ENCODE measurements at regions of chr2 and their contacts with region 1.

Region 1: GRCh38 chr2:172710584-172711024 is 25.0 kb upstream of the RAPGEF4 start:
- DNase-seq: peak; percentile 56 to 66
- ATAC-seq: peak; percentile 87
- H3K4me3 ChIP-seq: no peak overlapping the region
- H3K27ac ChIP-seq: no peak overlapping the region
- H3K4me1 ChIP-seq: 0 out of 3 replicates have a peak, but pooled peaks cover 4% of the 10 kb centered on the region
- CTCF ChIP-seq: peak; percentile 94
- EP300 ChIP-seq: no peak
- POLR2A ChIP-seq: no peak
- RAD21 ChIP-seq: peak; percentile 96

Region 2: GRCh38 chr2:172588931-172589330 is 121.7 kb before region 1 on chr2:
- CTCF ChIA-PET with region 1: interaction called, 217 read pairs
- POLR2A ChIA-PET with region 1: no interaction called
- DNase-seq: no peak
- ATAC-seq: no peak
- H3K4me3 ChIP-seq: no peak overlapping the region
- H3K27ac ChIP-seq: no peak overlapping the region
- H3K4me1 ChIP-seq: no peaks in the 10 kb centered on the region
- CTCF ChIP-seq: no peak
- EP300 ChIP-seq: no peak
- POLR2A ChIP-seq: no peak
- RAD21 ChIP-seq: no peak

Region 3: DNA sequence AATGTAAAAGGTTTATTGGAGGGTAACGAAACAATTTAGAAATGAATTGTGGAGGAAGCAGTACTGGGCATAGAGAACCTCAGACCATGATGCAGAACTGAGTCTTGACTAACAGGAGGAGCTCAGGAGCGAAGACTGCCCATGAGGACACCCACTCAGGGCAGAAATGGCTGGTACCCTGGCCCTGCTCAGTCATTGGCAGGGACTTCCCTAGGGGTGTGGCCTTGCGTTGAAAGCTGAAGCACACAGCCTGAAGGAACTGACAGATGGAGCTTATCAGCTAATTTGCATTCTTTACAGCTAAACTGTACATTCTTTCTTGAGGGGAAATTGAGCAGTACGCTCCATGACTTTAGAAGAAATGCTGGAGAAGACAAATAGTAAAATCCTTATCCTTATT is 97.6 kb before region 1 on chr2:
- CTCF ChIA-PET with region 1: interaction called, 11 read pairs
- POLR2A ChIA-PET with region 1: no interaction called
- DNase-seq: no peak
- ATAC-seq: no peak
- H3K4me3 ChIP-seq: no peak overlapping the region
- H3K27ac ChIP-seq: no peak overlapping the region
- H3K4me1 ChIP-seq: no peaks in the 10 kb centered on the region
- CTCF ChIP-seq: no peak
- EP300 ChIP-seq: no peak
- POLR2A ChIP-seq: no peak
- RAD21 ChIP-seq: no peak

Region 4: GRCh38 chr2:172685467-172685866 is 25.1 kb before region 1 on chr2:
- CTCF ChIA-PET with region 1: interaction called, 13 read pairs
- POLR2A ChIA-PET with region 1: no interaction called
- DNase-seq: no peak
- ATAC-seq: no peak
- H3K4me3 ChIP-seq: no peak overlapping the region
- H3K27ac ChIP-seq: no peak overlapping the region
- H3K4me1 ChIP-seq: no peaks in the 10 kb centered on the region
- CTCF ChIP-seq: no peak
- EP300 ChIP-seq: no peak
- POLR2A ChIP-seq: no peak
- RAD21 ChIP-seq: no peak

Region 5: DNA sequence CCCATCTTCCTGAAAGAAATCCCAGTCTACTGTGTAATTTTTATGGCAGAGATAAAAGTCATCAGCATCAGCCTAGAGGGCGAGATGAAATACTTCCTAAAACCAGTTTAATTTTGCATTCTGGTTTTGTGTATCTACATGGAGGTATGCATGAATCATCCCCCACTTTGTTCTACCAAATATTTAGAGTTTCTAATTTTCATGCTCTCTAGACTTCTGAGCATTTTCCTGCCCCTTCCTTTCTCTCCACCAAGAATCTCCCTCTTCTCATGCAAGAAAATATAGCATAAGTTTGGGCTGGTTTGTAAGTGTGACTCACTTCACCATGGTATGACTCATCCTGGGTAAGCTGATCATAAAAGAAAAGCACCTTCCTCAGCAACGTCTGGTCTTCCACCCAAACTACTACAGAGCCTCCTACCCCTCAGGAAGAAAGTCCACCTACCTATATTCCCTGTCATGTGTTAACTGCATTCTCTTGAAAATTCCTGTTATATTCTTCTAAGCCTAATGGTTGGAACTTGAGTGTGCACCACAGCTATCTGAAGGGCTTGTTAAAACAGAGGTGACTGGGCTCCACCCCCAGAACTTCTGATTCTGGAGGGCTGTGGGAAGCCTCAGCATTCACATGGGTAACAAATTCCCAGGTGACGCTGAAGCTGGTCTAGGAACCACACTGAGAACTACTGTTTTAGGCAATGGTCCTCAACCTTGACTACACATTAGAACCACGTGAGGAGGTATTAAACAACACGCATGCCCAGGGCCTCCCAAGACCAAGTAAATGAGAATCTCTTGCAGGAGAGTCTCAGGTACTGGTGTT is 12.4 kb before region 1 on chr2:
- CTCF ChIA-PET with region 1: interaction called, 14 read pairs
- POLR2A ChIA-PET with region 1: no interaction called
- DNase-seq: peak; percentile 49 to 56
- ATAC-seq: peak; percentile 78 to 81
- H3K4me3 ChIP-seq: no peak overlapping the region
- H3K27ac ChIP-seq: peak overlapping the region; percentile 39 to 74
- H3K4me1 ChIP-seq: peaks cover 47% of the 10 kb centered on the region
- CTCF ChIP-seq: no peak
- EP300 ChIP-seq: no peak
- POLR2A ChIP-seq: no peak
- RAD21 ChIP-seq: no peak

Measured in A549 (cell line).